PC-9 (cell line): ENCODE measurements at regions of chr15 and their contacts with region 1.

Region 1: GRCh38 chr15:78108299-78109084 is 16.1 kb downstream of the SH2D7 start:
- DNase-seq: peak; percentile 69 to 76
- H3K4me3 ChIP-seq: no peak overlapping the region
- H3K27ac ChIP-seq: no peak overlapping the region
- H3K4me1 ChIP-seq: peaks cover 18% of the 10 kb centered on the region
- H3K27me3 ChIP-seq: no peaks in the 10 kb centered on the region
- CTCF ChIP-seq: peak; percentile 86

Region 2: DNA sequence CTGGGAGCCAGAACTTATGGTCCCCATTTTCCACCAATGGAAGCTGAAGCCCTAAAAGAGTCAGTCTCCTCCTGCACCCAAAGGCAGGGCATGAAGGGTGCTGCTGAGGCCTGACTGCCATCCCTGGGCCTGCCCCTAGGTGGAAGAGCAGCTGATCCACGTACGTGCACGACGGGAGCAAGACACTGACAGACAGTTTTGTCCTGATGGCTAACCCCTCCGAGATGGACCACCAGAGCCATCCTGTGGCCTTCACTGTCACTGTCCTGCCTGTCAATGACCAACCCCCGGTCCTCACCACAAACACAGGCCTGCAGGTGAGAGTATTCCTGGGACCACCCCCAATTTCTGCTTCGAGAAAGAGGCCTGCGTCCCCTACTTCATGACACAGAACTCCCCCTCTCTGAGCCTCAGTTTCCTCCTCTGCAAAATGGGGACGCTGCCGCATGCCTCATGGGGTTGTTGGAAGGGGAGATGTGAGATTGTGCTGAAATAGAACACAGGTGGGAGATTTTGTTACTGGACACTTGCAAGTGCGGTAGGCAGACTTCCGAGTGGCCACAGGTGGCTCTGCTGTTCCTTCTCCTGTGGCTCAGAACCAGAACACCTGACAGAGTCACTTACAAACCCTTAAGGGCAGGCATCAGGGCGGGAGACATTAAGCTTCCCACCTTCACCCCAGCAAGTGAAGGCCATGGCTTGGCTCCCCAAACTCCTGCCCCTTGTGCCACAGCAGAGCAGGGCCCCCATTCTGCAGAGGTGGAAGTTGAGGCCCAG is 206.3 kb before region 1 on chr15:
- CTCF ChIA-PET with region 1: no interaction called
- POLR2A ChIA-PET with region 1: no interaction called
- intact Hi-C with region 1: loop called (anchors 5 kb)
- DNase-seq: no peak
- H3K4me3 ChIP-seq: no peak overlapping the region
- H3K27ac ChIP-seq: no peak overlapping the region
- H3K4me1 ChIP-seq: no peaks in the 10 kb centered on the region
- H3K27me3 ChIP-seq: no peaks in the 10 kb centered on the region
- CTCF ChIP-seq: 0 out of 2 replicates have a peak, but pooled peaks have one; percentile 14

Region 3: GRCh38 chr15:77959432-77959879 is 149.0 kb before region 1 on chr15:
- CTCF ChIA-PET with region 1: interaction called, 15 read pairs
- POLR2A ChIA-PET with region 1: no interaction called
- intact Hi-C with region 1: loop called (anchors 1 kb)
- DNase-seq: peak; percentile 40 to 80
- H3K4me3 ChIP-seq: no peak overlapping the region
- H3K27ac ChIP-seq: no peak overlapping the region
- H3K4me1 ChIP-seq: no peaks in the 10 kb centered on the region
- H3K27me3 ChIP-seq: 0 out of 2 replicates have a peak, but pooled peaks cover 3% of the 10 kb centered on the region
- CTCF ChIP-seq: peak; percentile 94

Region 4: GRCh38 chr15:78000091-78000926 is 108.2 kb before region 1 on chr15:
- CTCF ChIA-PET with region 1: interaction called, 9 read pairs
- POLR2A ChIA-PET with region 1: no interaction called
- intact Hi-C with region 1: loop called (anchors 1 kb)
- DNase-seq: peak; percentile 65 to 66
- H3K4me3 ChIP-seq: no peak overlapping the region
- H3K27ac ChIP-seq: no peak overlapping the region
- H3K4me1 ChIP-seq: no peaks in the 10 kb centered on the region
- H3K27me3 ChIP-seq: no peaks in the 10 kb centered on the region
- CTCF ChIP-seq: peak; percentile 81

Region 5: GRCh38 chr15:78142332-78142731 is 33.8 kb after region 1 on chr15:
- CTCF ChIA-PET with region 1: no interaction called
- POLR2A ChIA-PET with region 1: no interaction called
- intact Hi-C with region 1: no loop called
- DNase-seq: no peak
- H3K4me3 ChIP-seq: no peak overlapping the region
- H3K27ac ChIP-seq: no peak overlapping the region
- H3K4me1 ChIP-seq: no peaks in the 10 kb centered on the region
- H3K27me3 ChIP-seq: no peaks in the 10 kb centered on the region
- CTCF ChIP-seq: no peak

Region 6: DNA sequence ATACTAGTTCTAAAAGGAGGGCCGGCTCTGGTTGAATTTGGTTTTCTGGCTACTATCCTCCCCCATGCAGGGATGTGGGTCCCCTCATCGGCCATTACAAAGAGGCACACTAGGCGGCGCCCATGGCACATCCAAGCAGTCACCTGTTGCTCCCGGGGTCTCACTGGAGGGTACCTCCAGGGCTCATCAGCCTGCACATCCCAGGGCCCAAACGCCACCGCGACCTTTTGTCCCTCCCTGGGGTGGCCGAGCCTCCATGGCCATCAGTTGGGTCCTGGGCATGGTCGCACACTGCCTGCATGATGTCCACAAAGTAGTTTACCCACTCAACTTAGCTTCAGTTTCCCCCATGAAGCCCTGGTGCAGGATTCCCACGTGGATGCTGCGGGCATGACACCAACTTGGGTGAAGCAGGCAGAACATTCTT is 69.0 kb after region 1 on chr15:
- CTCF ChIA-PET with region 1: no interaction called
- POLR2A ChIA-PET with region 1: interaction called, 3 read pairs
- intact Hi-C with region 1: loop called (anchors 5 kb)
- DNase-seq: peak in 1 of 2 experiments; percentile 57
- H3K4me3 ChIP-seq: no peak overlapping the region
- H3K27ac ChIP-seq: no peak overlapping the region
- H3K4me1 ChIP-seq: no peaks in the 10 kb centered on the region
- H3K27me3 ChIP-seq: no peaks in the 10 kb centered on the region
- CTCF ChIP-seq: peak; percentile 85

Region 7: GRCh38 chr15:78241007-78241406 is 132.5 kb after region 1 on chr15:
- CTCF ChIA-PET with region 1: interaction called, 5 read pairs
- POLR2A ChIA-PET with region 1: no interaction called
- intact Hi-C with region 1: loop called (anchors 1 kb)
- DNase-seq: peak; percentile 43 to 86
- H3K4me3 ChIP-seq: no peak overlapping the region
- H3K27ac ChIP-seq: no peak overlapping the region
- H3K4me1 ChIP-seq: 0 out of 2 replicates have a peak, but pooled peaks cover 3% of the 10 kb centered on the region
- H3K27me3 ChIP-seq: no peaks in the 10 kb centered on the region
- CTCF ChIP-seq: peak; percentile 85

Region 8: GRCh38 chr15:78315686-78316282 is 207.3 kb after region 1 on chr15:
- CTCF ChIA-PET with region 1: no interaction called
- POLR2A ChIA-PET with region 1: no interaction called
- intact Hi-C with region 1: no loop called
- DNase-seq: no peak
- H3K4me3 ChIP-seq: no peak overlapping the region
- H3K27ac ChIP-seq: no peak overlapping the region
- H3K4me1 ChIP-seq: no peaks in the 10 kb centered on the region
- H3K27me3 ChIP-seq: no peaks in the 10 kb centered on the region
- CTCF ChIP-seq: no peak; the same call in 1 of the 2 replicates

Region 9: GRCh38 chr15:78422571-78423340 is 314.3 kb after region 1 on chr15:
- CTCF ChIA-PET with region 1: interaction called, 3 read pairs
- POLR2A ChIA-PET with region 1: interaction called, 3 read pairs
- intact Hi-C with region 1: loop called (anchors 5 kb)
- DNase-seq: peak; percentile 41 to 43
- H3K4me3 ChIP-seq: no peak overlapping the region
- H3K27ac ChIP-seq: no peak overlapping the region
- H3K4me1 ChIP-seq: no peaks in the 10 kb centered on the region
- H3K27me3 ChIP-seq: no peaks in the 10 kb centered on the region
- CTCF ChIP-seq: peak; percentile 90

Region 10: DNA sequence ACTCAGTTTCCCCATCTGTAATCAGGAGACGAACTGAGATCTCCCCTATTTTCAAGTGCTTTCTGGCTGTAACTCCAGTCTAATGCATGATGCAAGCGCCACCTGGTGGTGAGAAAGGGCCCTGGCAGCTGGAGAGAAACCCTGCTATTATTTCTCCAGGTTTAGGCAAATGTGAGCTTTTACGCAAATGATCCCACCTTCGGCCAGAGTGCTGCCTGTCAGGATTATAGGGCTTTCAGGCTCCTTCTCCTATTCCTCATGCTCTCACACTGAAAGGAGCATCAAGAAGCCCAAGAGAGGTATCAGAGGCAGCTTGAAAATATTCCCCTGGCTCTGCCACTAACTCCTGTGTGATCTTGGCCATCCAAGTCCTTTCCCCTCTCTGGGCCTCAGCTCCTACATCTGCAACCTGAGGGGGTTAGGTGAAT is 1076.0 kb after region 1 on chr15:
- CTCF ChIA-PET with region 1: no interaction called
- POLR2A ChIA-PET with region 1: no interaction called
- intact Hi-C with region 1: no loop called
- DNase-seq: peak in 1 of 2 experiments; percentile 59
- H3K4me3 ChIP-seq: no peak overlapping the region
- H3K27ac ChIP-seq: no peak overlapping the region
- H3K4me1 ChIP-seq: peaks cover 9% of the 10 kb centered on the region
- H3K27me3 ChIP-seq: no peaks in the 10 kb centered on the region
- CTCF ChIP-seq: peak; percentile 98